Activated CD4-positive, alpha-beta T cell treated with anti-CD3 and anti-CD28 coated beads for 36 hours (primary cell): ENCODE measurements at regions of chr12 and their contacts with region 1.

Region 1: GRCh38 chr12:52390739-52391617 is 5.5 kb upstream of the KRT84 start:
- DNase-seq: peak; percentile 21
- ATAC-seq: no peak
- H3K4me3 Mint-ChIP-seq: no peak overlapping the region
- H3K27ac Mint-ChIP-seq: no peak overlapping the region
- H3K4me1 Mint-ChIP-seq: no peaks in the 10 kb centered on the region
- H3K27me3 Mint-ChIP-seq: peaks cover 7% of the 10 kb centered on the region

Region 2: DNA sequence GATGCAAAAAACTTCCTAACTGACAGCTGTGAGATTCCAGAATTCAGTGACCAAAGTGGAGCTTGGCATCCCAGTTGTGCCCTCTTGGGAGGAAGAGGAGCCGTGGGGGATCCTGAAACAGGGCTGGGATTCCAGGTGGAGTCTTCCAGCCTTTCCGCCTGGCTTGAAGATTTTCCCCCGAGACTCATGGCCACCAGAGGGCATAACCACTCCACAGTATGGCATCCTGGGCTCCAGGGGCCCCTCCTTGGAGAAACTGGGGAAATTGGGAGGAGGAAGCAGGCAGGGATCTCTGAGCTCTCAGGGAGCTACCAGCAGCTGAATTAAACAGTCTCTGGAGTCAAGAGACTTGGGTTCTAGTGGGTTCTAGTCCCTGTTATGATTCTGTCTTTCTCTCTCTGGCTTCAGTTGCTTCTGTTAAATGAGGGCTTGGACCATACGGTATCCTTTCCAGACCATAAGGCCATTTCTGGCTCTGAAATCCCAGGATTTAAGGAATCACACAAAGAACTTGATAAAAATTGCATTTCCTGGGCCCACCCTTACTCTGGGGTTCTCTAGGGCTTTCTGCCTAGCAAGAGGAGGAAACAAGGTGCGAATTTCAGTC is 386.8 kb before region 1 on chr12:
- CTCF ChIA-PET with region 1: no interaction called
- POLR2A ChIA-PET with region 1: no interaction called
- intact Hi-C with region 1: no loop called
- DNase-seq: peak; percentile 43
- ATAC-seq: no peak
- H3K4me3 Mint-ChIP-seq: no peak overlapping the region
- H3K27ac Mint-ChIP-seq: no peak overlapping the region
- H3K4me1 Mint-ChIP-seq: peaks cover 13% of the 10 kb centered on the region
- H3K27me3 Mint-ChIP-seq: peaks cover 4% of the 10 kb centered on the region

Region 3: DNA sequence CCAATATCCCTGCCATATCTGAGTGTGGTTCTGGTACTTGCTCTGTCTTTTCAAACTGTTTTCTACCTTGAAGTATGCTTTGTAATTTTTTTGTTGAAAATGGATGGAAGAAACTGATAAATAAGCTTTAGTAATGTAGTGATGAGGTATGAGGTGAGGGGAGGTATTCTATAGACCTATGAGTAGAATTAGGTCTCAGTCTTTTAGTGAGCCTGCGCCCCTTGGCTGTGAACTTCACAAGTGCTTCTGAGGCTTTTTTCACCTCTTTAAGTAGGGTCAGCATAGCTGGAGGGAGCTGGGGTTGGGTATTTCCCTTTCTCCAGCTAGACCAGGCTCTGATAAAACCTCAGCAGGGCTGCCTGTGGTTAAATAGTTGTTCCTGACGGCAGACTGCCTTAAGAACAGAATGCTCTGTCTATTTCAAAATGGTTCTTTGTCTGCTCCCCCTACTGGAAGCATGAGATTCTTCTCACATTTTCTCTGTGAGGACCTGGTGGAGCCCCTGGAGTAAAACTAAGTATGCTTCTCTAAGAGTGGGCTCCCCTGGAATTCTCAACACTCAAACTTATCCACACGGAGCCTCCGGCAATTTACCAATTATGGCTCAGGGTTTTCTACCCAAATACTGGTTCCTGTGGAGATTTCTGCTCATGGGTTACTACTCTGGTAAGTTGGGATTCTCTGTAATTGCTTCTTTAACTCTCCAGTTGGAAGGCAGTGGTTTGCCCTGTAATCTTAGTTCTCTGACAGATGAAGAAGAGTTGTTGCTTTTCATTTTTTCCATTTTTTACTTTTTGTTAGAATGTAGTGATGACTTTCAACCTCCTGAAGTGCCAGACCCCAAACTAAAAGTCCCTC is 116.1 kb after region 1 on chr12:
- CTCF ChIA-PET with region 1: interaction called, 3 read pairs
- POLR2A ChIA-PET with region 1: no interaction called
- intact Hi-C with region 1: loop called in 1 of 2 experiments (anchors 10 kb)
- DNase-seq: no peak
- ATAC-seq: peak; percentile 58
- H3K4me3 Mint-ChIP-seq: no peak overlapping the region
- H3K27ac Mint-ChIP-seq: no peak overlapping the region
- H3K4me1 Mint-ChIP-seq: no peaks in the 10 kb centered on the region
- H3K27me3 Mint-ChIP-seq: peaks cover 24% of the 10 kb centered on the region

Region 4: GRCh38 chr12:52561880-52562449 is 171.0 kb after region 1 on chr12:
- CTCF ChIA-PET with region 1: no interaction called
- POLR2A ChIA-PET with region 1: no interaction called
- intact Hi-C with region 1: no loop called
- DNase-seq: no peak
- ATAC-seq: no peak
- H3K4me3 Mint-ChIP-seq: no peak overlapping the region
- H3K27ac Mint-ChIP-seq: no peak overlapping the region
- H3K4me1 Mint-ChIP-seq: no peaks in the 10 kb centered on the region
- H3K27me3 Mint-ChIP-seq: peaks cover 7% of the 10 kb centered on the region